Right cardiac atrium (tissue), 5 donors: ENCODE measurements at regions of chr4 and their contacts with region 1.

Region 1: GRCh38 chr4:158722917-158723793 is at the start of gene PPID:
- DNase-seq: peak; percentile 87 to 94 (median 94)
- ATAC-seq: peak; percentile 98
- H3K4me3 ChIP-seq: peak within 1 kb of the TSS; percentile 88
- H3K27ac ChIP-seq: peak within 1 kb of the TSS; percentile 88
- H3K4me1 ChIP-seq: peaks cover 4% of the 10 kb centered on the region
- H3K27me3 ChIP-seq: no peaks in the 10 kb centered on the region
- total RNA-seq, gene PPID: 19.2 to 38.3 (median 28.0) TPM

Region 2: GRCh38 chr4:158395889-158396288 is 327.3 kb before region 1 on chr4:
- intact Hi-C with region 1: no loop called
- DNase-seq: no peak
- ATAC-seq: no peak
- H3K4me3 ChIP-seq: no peak overlapping the region
- H3K27ac ChIP-seq: no peak overlapping the region
- H3K4me1 ChIP-seq: no peaks in the 10 kb centered on the region
- H3K27me3 ChIP-seq: no peaks in the 10 kb centered on the region

Region 3: GRCh38 chr4:158778156-158778711 is 55.1 kb after region 1 on chr4:
- intact Hi-C with region 1: no loop called
- DNase-seq: no peak
- ATAC-seq: no peak
- H3K4me3 ChIP-seq: no peak overlapping the region
- H3K27ac ChIP-seq: no peak overlapping the region
- H3K4me1 ChIP-seq: peaks cover 15% of the 10 kb centered on the region
- H3K27me3 ChIP-seq: no peaks in the 10 kb centered on the region

Region 4: GRCh38 chr4:159206427-159206871 is 483.3 kb after region 1 on chr4:
- intact Hi-C with region 1: loop called in 3 of 4 experiments (anchors 10 kb)
- DNase-seq: no peak
- ATAC-seq: no peak
- H3K4me3 ChIP-seq: no peak overlapping the region
- H3K27ac ChIP-seq: no peak overlapping the region
- H3K4me1 ChIP-seq: peaks cover 10% of the 10 kb centered on the region
- H3K27me3 ChIP-seq: no peaks in the 10 kb centered on the region